Activated B cell treated with CpG ODN at 0.5 μM for 24 hours (primary cell): ENCODE measurements at regions of chr6 and their contacts with region 1.

Region 1: DNA sequence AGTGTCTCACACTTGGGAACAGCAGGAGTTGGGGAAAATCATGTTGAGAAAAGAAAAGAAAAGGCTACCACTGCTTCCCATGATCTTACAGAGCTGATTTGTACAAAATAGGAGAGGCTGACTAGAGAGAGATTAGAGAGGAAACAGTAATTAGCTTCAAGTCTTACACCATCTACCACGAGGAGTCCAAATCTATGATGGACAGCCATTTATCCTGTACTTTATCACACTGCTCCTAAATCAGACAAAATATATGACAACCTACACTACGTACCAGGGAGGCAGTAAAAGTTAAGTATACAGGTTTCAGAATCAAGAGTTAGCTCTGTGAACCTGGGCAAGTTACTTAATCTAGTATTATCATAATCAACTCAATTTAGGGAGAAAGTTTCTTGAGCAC is 38.0 kb downstream of the RARS2 start:
- DNase-seq: no peak
- ATAC-seq: no peak
- H3K4me3 Mint-ChIP-seq: no peak overlapping the region
- H3K27ac Mint-ChIP-seq: no peak overlapping the region
- H3K4me1 Mint-ChIP-seq: no peaks in the 10 kb centered on the region
- H3K27me3 Mint-ChIP-seq: no peaks in the 10 kb centered on the region
- CTCF ChIP-seq: no peak

Region 2: GRCh38 chr6:87540539-87540938 is 11.3 kb before region 1 on chr6:
- CTCF ChIA-PET with region 1: no interaction called
- POLR2A ChIA-PET with region 1: no interaction called
- intact Hi-C with region 1: loop called (anchors 2 kb)
- DNase-seq: no peak
- ATAC-seq: no peak
- H3K4me3 Mint-ChIP-seq: no peak overlapping the region
- H3K27ac Mint-ChIP-seq: no peak overlapping the region
- H3K4me1 Mint-ChIP-seq: peaks cover 24% of the 10 kb centered on the region
- H3K27me3 Mint-ChIP-seq: no peaks in the 10 kb centered on the region
- CTCF ChIP-seq: no peak